Activated CD4-positive, alpha-beta T cell treated with anti-CD3 and anti-CD28 coated beads for 36 hours (primary cell): ENCODE measurements at regions of chr9 and their contacts with region 1.

Region 1: GRCh38 chr9:72526901-72527800 is 5.7 kb downstream of the TMC1 start:
- DNase-seq: peak; percentile 90
- ATAC-seq: peak; percentile 88
- H3K4me3 Mint-ChIP-seq: peak overlapping the region; percentile 69
- H3K27ac Mint-ChIP-seq: peak overlapping the region; percentile 94
- H3K4me1 Mint-ChIP-seq: peaks cover 43% of the 10 kb centered on the region
- H3K27me3 Mint-ChIP-seq: no peaks in the 10 kb centered on the region

Region 2: GRCh38 chr9:72443855-72444254 is 83.3 kb before region 1 on chr9:
- CTCF ChIA-PET with region 1: interaction called, 5 read pairs
- POLR2A ChIA-PET with region 1: interaction called, 3 read pairs
- intact Hi-C with region 1: loop called (anchors 2 kb)
- DNase-seq: peak; percentile 8
- ATAC-seq: peak; percentile 72
- H3K4me3 Mint-ChIP-seq: no peak overlapping the region
- H3K27ac Mint-ChIP-seq: peak overlapping the region; percentile 55
- H3K4me1 Mint-ChIP-seq: peaks cover 24% of the 10 kb centered on the region
- H3K27me3 Mint-ChIP-seq: no peaks in the 10 kb centered on the region

Region 3: GRCh38 chr9:72509635-72510034 is 17.5 kb before region 1 on chr9:
- CTCF ChIA-PET with region 1: interaction called, 3 read pairs
- POLR2A ChIA-PET with region 1: no interaction called
- intact Hi-C with region 1: loop called (anchors 1 kb)
- DNase-seq: no peak
- ATAC-seq: peak; percentile 87
- H3K4me3 Mint-ChIP-seq: peak overlapping the region; percentile 29
- H3K27ac Mint-ChIP-seq: peak overlapping the region; percentile 87
- H3K4me1 Mint-ChIP-seq: peaks cover 17% of the 10 kb centered on the region
- H3K27me3 Mint-ChIP-seq: no peaks in the 10 kb centered on the region

Region 4: GRCh38 chr9:72557549-72557948 is 30.4 kb after region 1 on chr9:
- CTCF ChIA-PET with region 1: interaction called, 3 read pairs
- POLR2A ChIA-PET with region 1: no interaction called
- intact Hi-C with region 1: loop called (anchors 1 kb)
- DNase-seq: peak; percentile 70
- ATAC-seq: peak; percentile 99
- H3K4me3 Mint-ChIP-seq: no peak overlapping the region
- H3K27ac Mint-ChIP-seq: peak overlapping the region; percentile 6
- H3K4me1 Mint-ChIP-seq: peaks cover 11% of the 10 kb centered on the region
- H3K27me3 Mint-ChIP-seq: no peaks in the 10 kb centered on the region

Region 5: GRCh38 chr9:72592502-72593403 is 65.6 kb after region 1 on chr9:
- CTCF ChIA-PET with region 1: interaction called, 3 read pairs
- POLR2A ChIA-PET with region 1: no interaction called
- intact Hi-C with region 1: loop called (anchors 5 to 10 kb)
- DNase-seq: peak; percentile 29
- ATAC-seq: peak; percentile 69
- H3K4me3 Mint-ChIP-seq: no peak overlapping the region
- H3K27ac Mint-ChIP-seq: no peak overlapping the region
- H3K4me1 Mint-ChIP-seq: peaks cover 19% of the 10 kb centered on the region
- H3K27me3 Mint-ChIP-seq: peaks cover 6% of the 10 kb centered on the region